ENCODE measurements at regions of chr14 and their contacts with region 1.

Region 1: GRCh38 chr14:75643985-75644384 is 16.7 kb downstream of the ERG28 start:
- DNase-seq: no peak
- ATAC-seq: no peak
- H3K4me3 ChIP-seq: no peak overlapping the region
- H3K27ac ChIP-seq: peak overlapping the region; percentile 49
- H3K4me1 ChIP-seq: peaks cover 26% of the 10 kb centered on the region
- H3K27me3 ChIP-seq: no peaks in the 10 kb centered on the region
- CTCF ChIP-seq: no peak

Region 2: GRCh38 chr14:75522224-75522982 is 121.6 kb before region 1 on chr14 and contains the start of gene BATF:
- intact Hi-C with region 1: no loop called
- DNase-seq: no peak
- ATAC-seq: no peak
- H3K4me3 ChIP-seq: peak within 1 kb of the TSS; percentile 44
- H3K27ac ChIP-seq: no peak within 1 kb of the TSS
- H3K4me1 ChIP-seq: no peaks in the 10 kb centered on the region
- H3K27me3 ChIP-seq: no peaks in the 10 kb centered on the region
- CTCF ChIP-seq: no peak
- total RNA-seq, gene BATF: 0.58 to 0.77 (median 0.76) TPM in 3 of 4 donors, not detected in the other

Region 3: DNA sequence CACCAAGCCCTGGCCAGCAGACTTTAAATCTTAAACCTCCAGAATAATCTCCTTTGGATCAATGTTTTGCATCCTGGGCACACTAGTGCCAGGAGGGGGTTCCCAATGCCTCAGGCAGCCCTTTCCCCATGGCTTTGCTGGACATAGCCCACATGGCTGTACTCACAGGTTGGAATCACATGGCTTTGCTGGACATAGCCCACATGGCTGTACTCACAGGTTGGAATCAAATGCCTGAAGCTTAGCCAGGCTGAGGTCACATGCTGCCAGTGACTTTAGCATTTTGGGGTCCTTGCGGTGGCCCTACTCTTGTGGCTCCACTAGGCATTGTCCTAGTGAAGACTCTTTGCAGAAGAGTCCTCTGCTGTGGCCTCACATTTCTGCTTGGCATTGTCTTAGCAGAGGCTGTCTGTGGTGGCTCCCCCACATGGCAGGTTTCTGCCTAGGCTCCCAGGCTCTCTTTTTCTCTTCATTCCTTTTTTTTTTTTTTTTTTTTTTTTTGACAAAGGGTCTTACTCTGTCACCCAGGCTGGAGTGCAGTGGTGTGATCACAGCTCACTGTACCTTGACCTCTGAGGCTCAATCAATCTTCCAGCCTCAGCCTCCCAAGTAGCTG is 52.5 kb before region 1 on chr14:
- intact Hi-C with region 1: loop called in 1 of 2 experiments (anchors 5 kb)
- DNase-seq: no peak
- ATAC-seq: peak in 3 of 4 donors; percentile 50 to 85 (median 82)
- H3K4me3 ChIP-seq: no peak overlapping the region
- H3K27ac ChIP-seq: no peak overlapping the region
- H3K4me1 ChIP-seq: peaks cover 15% of the 10 kb centered on the region
- H3K27me3 ChIP-seq: no peaks in the 10 kb centered on the region
- CTCF ChIP-seq: no peak

Measured in psoas muscle (tissue), 8 donors.